ENCODE measurements at regions of chr11 and their contacts with region 1.

Region 1: GRCh38 chr11:36702330-36703055 is 104.5 kb upstream of the RAG2 start:
- DNase-seq: peak; percentile 35
- H3K4me3 ChIP-seq: no peak overlapping the region
- H3K27ac ChIP-seq: no peak overlapping the region
- H3K4me1 ChIP-seq: no peaks in the 10 kb centered on the region
- H3K27me3 ChIP-seq: no peaks in the 10 kb centered on the region
- CTCF ChIP-seq: peak; percentile 44 to 87 (median 74)
- POLR2A ChIP-seq: no peak

Region 2: DNA sequence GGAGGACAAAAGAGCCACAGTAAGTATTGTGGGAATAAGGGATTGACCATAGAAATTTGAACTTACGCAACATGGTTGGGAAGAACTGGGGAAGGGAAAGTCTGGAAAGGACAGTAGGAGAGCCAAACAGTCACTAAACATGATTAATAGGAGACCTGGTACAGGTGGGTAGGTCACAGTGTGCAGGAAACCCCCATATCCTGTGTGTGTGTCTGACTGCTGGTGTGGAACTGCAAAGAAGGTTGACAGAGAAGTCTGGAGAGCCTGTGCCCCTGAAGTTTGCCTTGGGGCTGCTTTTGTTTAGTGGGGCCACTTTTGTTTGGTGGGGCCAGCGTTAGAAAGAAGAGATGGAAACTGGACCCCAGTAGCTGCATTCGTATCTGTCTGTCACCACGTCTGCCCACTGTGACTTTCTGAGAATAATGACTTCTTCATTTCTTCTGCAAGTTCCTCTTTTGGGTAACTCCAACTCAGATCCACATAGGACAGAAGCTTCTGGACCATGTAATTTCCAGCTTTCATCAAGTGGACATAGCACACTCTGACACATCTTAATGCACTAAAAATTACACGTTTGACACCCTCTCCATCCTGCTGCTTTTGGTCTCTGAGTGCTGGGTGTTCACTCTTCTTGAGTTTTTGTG is 22.4 kb after region 1 on chr11:
- intact Hi-C with region 1: no loop called
- DNase-seq: no peak
- H3K4me3 ChIP-seq: no peak overlapping the region
- H3K27ac ChIP-seq: no peak overlapping the region
- H3K4me1 ChIP-seq: no peaks in the 10 kb centered on the region
- H3K27me3 ChIP-seq: no peaks in the 10 kb centered on the region
- CTCF ChIP-seq: no peak
- POLR2A ChIP-seq: no peak

Region 3: DNA sequence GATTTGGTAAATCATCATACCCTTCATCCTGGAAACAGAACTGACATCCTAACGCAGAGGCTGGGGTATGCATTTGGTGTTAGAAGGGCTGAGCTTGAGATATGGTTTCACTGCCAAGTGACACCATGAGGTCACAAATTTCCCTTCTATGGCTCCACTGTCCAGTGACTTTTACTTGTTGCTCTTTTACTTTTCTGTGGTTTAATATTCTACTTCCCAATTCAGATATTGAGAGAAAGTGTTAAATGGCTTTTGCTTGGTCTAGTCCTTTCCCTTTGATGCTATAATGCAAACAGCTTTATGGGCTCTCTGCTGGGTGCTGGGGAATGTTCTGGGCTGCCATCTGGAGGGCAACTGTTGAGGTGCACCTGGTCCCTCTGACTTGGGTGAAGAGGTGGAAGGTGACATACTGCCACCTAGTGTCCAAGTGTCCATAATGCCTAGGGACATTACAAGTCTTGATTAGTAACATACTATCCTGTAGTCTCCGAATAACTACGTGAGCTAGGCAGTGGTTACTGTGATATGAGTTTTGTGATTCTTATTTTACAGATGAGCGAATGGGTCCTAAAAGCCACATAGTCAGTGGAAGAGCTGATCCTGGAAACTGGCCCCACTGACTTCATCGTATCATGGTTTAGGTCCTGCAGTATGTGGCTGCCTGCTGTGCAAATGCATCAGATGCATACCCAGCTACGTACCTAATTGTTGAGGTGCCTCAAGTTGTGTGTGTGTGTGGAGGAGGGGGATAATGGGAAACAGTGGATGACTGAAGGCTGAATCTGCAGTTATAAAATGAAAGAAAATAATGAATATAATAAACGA is 44.6 kb after region 1 on chr11:
- intact Hi-C with region 1: loop called (anchors 5 kb)
- DNase-seq: peak; percentile 91
- H3K4me3 ChIP-seq: no peak overlapping the region
- H3K27ac ChIP-seq: no peak overlapping the region
- H3K4me1 ChIP-seq: no peaks in the 10 kb centered on the region
- H3K27me3 ChIP-seq: no peaks in the 10 kb centered on the region
- CTCF ChIP-seq: peak; percentile 82 to 98 (median 96)
- POLR2A ChIP-seq: no peak